ENCODE measurements at regions of chr13 and their contacts with region 1.

Region 1: DNA sequence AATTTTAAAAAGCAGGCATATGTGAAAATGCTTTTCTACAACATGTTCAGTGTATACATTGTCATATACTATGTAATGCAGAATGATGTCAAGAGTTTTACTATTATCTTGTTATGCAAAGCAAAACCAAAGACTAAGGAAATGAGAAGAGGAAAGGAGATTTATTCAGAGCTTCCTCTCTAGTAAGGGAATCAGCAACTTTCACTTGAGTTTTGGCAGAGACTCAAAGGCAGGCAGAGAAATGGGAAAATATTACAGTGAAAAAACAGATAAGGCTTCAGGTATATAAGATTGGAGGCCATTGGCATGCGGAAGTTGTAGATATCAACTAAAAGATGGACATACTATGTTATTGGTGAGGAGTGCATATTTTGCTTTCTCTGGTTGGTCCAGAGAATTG is 512.0 kb upstream of the PCDH20 start:
- H3K4me3 Mint-ChIP-seq: no peak overlapping the region
- H3K27ac Mint-ChIP-seq: no peak overlapping the region
- H3K4me1 Mint-ChIP-seq: no peaks in the 10 kb centered on the region
- H3K27me3 Mint-ChIP-seq: no peaks in the 10 kb centered on the region

Region 2: GRCh38 chr13:61891401-61891800 is 36.2 kb before region 1 on chr13:
- intact Hi-C with region 1: no loop called
- H3K4me3 Mint-ChIP-seq: no peak overlapping the region
- H3K27ac Mint-ChIP-seq: no peak overlapping the region
- H3K4me1 Mint-ChIP-seq: no peaks in the 10 kb centered on the region
- H3K27me3 Mint-ChIP-seq: no peaks in the 10 kb centered on the region

Region 3: GRCh38 chr13:62320129-62321108 is 392.8 kb after region 1 on chr13:
- intact Hi-C with region 1: loop called (anchors 5 kb)
- H3K4me3 Mint-ChIP-seq: no peak overlapping the region
- H3K27ac Mint-ChIP-seq: no peak overlapping the region
- H3K4me1 Mint-ChIP-seq: no peaks in the 10 kb centered on the region
- H3K27me3 Mint-ChIP-seq: no peaks in the 10 kb centered on the region

Measured in dendritic cell treated with granulocyte-macrophage colony-stimulating factor and Interleukin-4, amounts not matched to agents 40 ng/mL and 50 ng/mL, for 4 days (primary cell).